GM18951 (cell line): ENCODE measurements at regions of chr15 and their contacts with region 1.

Region 1: DNA sequence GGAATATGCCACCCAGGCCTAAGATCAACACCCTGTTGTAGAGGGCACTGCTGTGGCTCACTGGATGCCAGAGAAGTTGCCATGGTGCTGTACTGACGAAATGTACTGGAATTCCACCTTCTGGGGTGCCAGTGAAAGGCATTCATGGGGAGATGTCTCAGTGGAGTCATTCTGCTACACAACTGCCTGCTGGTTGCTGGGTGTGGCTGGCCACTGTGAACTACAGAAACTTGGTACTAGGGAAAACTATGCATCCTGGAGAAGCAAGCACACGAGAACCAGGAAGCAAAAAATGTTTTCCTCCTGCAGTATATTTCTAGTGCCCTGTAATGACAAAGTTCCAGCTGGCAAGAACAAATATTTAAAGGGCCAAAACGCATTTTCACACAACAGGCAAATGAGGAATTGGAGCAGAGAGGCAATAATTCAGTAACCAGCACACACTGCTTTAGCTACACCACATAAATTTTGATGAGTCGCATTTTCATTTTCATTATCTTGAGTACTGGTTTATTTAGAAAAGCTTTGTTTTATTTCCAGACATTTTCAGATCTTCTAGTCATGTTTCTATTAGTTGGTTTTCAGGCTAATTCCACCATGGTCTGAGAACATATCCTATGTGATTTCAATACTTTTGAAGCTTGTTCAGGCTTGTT is 18.3 kb upstream of the RFX7 start:
- POLR2A ChIP-seq: no peak

Region 2: DNA sequence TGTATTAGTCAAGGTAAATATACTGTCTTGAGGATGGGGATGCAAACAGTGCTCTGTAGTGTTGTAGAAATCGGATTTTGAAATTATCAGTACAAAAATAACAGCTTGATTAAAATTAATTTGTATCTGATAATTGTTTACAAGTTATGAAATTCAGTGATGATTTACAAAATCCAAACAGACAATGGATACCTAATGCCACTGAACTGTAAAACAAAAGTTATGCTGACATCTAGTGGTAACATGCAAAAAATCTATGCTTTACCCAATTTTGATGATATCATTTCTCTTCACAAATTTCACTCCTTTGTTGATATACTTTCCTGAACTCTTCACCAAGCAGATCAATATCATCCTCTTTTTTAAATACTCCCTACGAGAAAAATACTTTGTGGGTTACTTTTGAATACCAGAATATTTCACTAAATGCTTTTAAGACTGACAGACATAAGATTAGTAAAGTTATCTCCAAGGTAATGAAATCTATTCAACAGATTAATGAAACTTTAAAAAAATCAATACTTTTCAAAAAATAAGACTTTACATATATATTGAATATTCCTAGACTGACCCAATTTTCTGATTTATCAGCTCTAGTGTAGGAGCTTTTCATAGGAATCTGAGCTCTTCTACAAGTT is 167.0 kb after region 1 on chr15:
- in situ Hi-C with region 1: loop called (anchors 25 kb)
- POLR2A ChIP-seq: no peak

Region 3: DNA sequence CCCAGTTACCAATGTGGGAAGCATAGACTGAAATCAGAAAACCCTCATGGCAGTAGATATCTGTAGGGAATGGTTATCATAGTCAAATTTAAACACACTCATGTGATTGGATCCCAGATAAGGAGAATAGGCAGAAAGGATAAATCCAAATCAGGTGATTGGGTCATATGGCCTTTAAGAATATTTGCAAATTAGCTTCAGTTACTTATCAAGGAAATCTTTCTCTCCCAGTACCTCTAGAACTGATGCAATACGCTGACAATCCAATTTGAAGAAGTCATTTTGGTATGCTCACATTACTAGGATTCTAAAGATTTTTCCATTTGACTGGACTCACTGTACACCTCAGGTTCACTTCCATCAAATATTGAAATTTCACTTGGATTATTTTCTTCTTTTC is 290.7 kb after region 1 on chr15:
- in situ Hi-C with region 1: no loop called
- POLR2A ChIP-seq: no peak